Heart left ventricle (tissue), 16 donors: ENCODE measurements at regions of chr6 and their contacts with region 1.

Region 1: DNA sequence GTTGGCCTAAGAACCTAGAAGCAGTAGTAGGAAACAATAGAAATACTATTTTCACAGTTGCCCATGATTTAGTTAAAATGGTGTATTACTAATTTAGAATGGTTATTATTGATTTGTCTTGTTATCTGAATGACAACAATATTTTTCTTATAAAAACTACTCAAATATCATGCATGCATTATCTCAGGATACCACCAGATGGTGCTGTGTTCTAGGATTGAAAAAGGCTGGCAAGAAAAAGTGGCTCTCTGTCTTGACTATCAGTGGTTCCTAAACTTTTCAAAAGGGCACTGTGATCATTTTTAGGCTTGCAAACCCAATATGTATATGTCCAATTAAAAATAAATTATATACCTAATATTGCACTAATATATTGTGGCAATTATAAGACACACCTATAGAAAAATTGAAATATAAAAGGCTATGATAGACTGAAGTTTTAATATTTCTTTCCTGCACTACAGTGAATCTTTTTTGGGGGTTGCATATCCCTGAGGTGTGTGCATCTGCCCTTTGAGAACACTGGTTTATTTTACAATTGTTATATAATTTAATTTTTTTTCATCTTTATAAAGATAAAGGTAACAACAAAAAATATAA is 131.7 kb upstream of the MLIP start:
- DNase-seq: no peak
- ATAC-seq: no peak
- H3K4me3 ChIP-seq: no peak overlapping the region
- H3K27ac ChIP-seq: no peak overlapping the region
- H3K4me1 ChIP-seq: peaks cover 0 to 7% (median 0%) of the 10 kb centered on the region in 12 donors
- H3K27me3 ChIP-seq: no peaks in the 10 kb centered on the region
- CTCF ChIP-seq: peak; percentile 73 to 93 (median 82)
- POLR2A ChIP-seq: no peak

Region 2: DNA sequence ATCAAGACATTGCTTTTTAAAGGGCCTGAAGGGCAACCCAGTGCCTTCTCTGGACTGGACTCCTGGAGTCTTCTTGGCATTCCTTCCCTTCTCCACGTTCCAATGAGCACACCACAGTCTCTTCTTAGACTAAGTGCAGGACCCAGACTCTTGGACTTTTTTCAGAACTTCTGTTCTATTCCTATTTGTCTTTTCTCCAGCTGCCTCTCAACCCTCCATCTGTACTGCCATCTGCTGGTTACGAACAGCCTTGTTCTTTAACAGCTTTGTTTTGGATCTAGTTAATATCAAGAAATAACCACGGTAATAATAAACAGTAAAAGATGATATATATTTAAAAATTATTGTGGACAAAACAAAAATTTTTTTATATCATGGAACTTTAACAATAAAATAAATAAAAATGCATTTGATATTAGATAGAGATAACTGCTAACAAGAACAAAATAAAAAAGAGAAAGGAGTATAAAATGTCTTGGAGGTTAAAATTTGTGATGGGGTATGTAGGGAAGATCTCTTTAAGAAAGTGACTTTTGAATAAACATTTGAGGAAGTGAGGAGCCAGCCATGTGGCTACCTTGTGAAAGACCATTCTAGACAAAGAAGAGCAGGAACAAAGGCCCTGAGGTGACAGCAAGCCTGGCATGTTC is 1089.7 kb after region 1 on chr6:
- intact Hi-C with region 1: loop called in 8 of 10 experiments (anchors 2 to 10 kb)
- DNase-seq: no peak
- ATAC-seq: peak in 2 of 4 donors; percentile 38 to 39
- H3K4me3 ChIP-seq: no peak overlapping the region
- H3K27ac ChIP-seq: no peak overlapping the region
- H3K4me1 ChIP-seq: peaks cover 0 to 5% (median 0%) of the 10 kb centered on the region in 12 donors
- H3K27me3 ChIP-seq: no peaks in the 10 kb centered on the region
- CTCF ChIP-seq: peak; percentile 34 to 65 (median 51)
- POLR2A ChIP-seq: no peak

Region 3: DNA sequence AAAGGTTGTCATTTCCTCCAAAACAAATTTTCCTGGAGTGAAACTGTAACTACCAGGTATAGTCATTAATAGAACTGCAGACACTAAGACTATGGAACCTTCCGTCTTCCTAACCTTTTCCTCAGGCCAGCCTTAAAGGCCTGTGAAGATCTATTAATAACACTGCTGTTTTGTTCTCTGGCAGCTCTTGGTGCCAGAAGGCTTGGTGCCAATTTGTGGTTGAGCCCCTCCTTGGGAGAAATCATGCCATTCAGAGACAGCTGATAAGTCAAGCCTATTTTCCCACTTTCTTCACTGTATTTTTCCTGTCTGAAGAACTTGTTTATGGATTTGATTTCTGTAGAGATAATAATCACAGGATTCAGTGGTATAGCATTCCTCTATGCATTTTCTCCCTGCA is 1259.5 kb after region 1 on chr6:
- intact Hi-C with region 1: loop called in 9 of 10 experiments (anchors 5 to 10 kb)
- DNase-seq: peak in 1 of 5 donors; percentile 26
- ATAC-seq: peak in 2 of 4 donors; percentile 42 to 52
- H3K4me3 ChIP-seq: no peak overlapping the region
- H3K27ac ChIP-seq: no peak overlapping the region
- H3K4me1 ChIP-seq: no peaks in the 10 kb centered on the region
- H3K27me3 ChIP-seq: no peaks in the 10 kb centered on the region
- CTCF ChIP-seq: no peak
- POLR2A ChIP-seq: no peak